ENCODE measurements at regions of chr2 and their contacts with region 1.

Region 1: GRCh38 chr2:174577967-174578589 is 19.5 kb downstream of the WIPF1 start:
- DNase-seq: peak; percentile 68
- ATAC-seq: peak; percentile 74
- H3K4me3 Mint-ChIP-seq: no peak overlapping the region
- H3K27ac Mint-ChIP-seq: peak overlapping the region; percentile 31
- H3K4me1 Mint-ChIP-seq: peaks cover 72% of the 10 kb centered on the region
- H3K27me3 Mint-ChIP-seq: no peaks in the 10 kb centered on the region

Region 2: DNA sequence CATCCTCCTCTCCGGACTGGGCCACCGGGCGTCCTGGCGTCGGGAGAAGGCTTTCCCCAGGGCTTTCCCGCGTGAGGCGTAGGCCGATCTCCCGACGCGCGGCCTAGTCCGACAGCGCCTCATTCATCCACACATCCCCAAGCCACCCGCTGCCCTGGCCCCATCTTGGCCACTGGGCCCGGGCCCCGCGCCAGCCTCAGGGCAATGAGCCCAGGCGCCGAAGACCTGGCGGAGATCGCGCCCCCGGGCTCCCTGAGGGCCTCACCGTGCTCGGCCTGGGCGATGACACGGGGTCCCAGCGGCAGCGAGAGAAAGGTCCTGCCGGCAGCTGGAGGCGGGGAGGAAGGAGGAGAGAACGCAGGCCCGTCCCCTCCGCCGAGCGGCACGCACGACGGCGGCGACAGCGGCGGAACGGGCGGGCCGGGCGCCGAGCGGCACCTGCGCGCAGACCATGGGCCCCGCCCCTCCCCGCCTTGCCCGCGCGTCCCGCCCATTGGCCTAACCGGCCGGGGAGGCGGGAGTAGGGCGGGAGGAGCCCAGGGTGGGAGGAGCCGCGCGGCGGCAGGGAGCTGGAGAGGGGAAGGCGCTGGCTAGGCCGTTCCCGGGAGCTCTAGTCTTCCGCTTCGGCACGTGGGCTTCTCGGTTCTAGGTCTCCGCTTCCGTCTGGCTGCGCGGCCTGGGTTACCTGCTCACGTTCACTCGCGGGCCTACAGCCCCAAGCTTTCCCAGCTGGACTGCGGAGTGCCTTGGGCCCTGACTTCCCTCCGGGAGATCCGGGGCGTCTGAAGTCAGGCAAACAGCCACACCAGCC is 329.7 kb before region 1 on chr2 and contains the start of gene OLA1:
- CTCF ChIA-PET with region 1: no interaction called
- POLR2A ChIA-PET with region 1: no interaction called
- intact Hi-C with region 1: no loop called
- DNase-seq: peak; percentile 98
- ATAC-seq: peak; percentile 97
- H3K4me3 Mint-ChIP-seq: peak within 1 kb of the TSS; percentile 90
- H3K27ac Mint-ChIP-seq: peak within 1 kb of the TSS; percentile 85
- H3K4me1 Mint-ChIP-seq: peaks cover 31% of the 10 kb centered on the region
- H3K27me3 Mint-ChIP-seq: no peaks in the 10 kb centered on the region
- total RNA-seq, gene OLA1: 136 to 157 TPM

Region 3: GRCh38 chr2:174593574-174594203 is 15.6 kb after region 1 on chr2:
- CTCF ChIA-PET with region 1: interaction called, 64 read pairs
- POLR2A ChIA-PET with region 1: interaction called, 3 read pairs
- intact Hi-C with region 1: no loop called
- DNase-seq: peak; percentile 80
- ATAC-seq: peak; percentile 67
- H3K4me3 Mint-ChIP-seq: peak overlapping the region; percentile 70
- H3K27ac Mint-ChIP-seq: peak overlapping the region; percentile 97
- H3K4me1 Mint-ChIP-seq: peaks cover 63% of the 10 kb centered on the region
- H3K27me3 Mint-ChIP-seq: no peaks in the 10 kb centered on the region

Region 4: GRCh38 chr2:174610243-174610995 is 32.3 kb after region 1 on chr2:
- CTCF ChIA-PET with region 1: interaction called, 14 read pairs
- POLR2A ChIA-PET with region 1: no interaction called
- intact Hi-C with region 1: no loop called
- DNase-seq: no peak
- ATAC-seq: no peak
- H3K4me3 Mint-ChIP-seq: peak overlapping the region; percentile 28
- H3K27ac Mint-ChIP-seq: peak overlapping the region; percentile 99
- H3K4me1 Mint-ChIP-seq: peaks cover 93% of the 10 kb centered on the region
- H3K27me3 Mint-ChIP-seq: no peaks in the 10 kb centered on the region

Region 5: DNA sequence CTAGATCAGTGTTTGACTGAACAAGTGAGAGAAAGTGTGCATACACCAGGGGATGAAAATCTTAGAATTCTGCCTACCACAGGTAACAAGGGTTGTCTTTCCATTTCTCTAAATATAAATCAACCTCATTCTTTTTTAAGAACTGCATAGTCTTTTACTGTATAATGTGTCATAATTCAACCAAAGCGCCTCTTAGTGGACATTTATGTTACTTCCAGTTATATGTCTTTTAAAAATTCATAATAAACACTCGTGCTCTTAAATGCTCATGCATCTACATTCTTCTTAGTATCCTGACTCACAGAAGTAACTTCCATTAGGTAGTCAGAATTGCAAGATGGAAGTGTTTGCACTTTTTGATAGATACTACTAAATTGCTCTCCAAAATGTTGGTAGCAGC is 110.0 kb after region 1 on chr2:
- CTCF ChIA-PET with region 1: interaction called, 172 read pairs
- POLR2A ChIA-PET with region 1: no interaction called
- intact Hi-C with region 1: loop called (anchors 1 kb)
- DNase-seq: no peak
- ATAC-seq: peak; percentile 70
- H3K4me3 Mint-ChIP-seq: no peak overlapping the region
- H3K27ac Mint-ChIP-seq: no peak overlapping the region
- H3K4me1 Mint-ChIP-seq: peaks cover 19% of the 10 kb centered on the region
- H3K27me3 Mint-ChIP-seq: no peaks in the 10 kb centered on the region

Region 6: DNA sequence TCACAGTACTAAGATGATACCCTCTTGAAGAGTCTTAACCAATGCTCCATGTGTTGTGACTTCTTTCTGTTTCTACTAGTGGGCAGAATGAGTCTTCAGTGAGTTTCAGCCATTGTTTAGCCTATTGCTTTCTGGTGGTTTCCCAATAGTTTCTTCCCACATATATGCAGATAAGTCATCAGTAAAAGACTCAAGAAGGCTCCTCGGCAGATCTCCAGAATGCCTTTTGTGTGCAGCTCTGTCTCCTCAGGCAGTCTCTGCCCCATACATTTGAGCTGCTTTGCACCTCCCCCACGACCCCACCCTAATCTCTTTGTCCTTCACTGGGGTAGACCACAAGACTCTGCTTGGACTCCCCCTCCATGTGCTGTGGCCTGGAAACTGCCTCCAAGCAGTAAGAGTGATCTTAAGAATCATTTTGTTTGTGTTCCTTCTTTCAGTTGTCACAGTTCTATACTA is 257.7 kb after region 1 on chr2:
- CTCF ChIA-PET with region 1: no interaction called
- POLR2A ChIA-PET with region 1: no interaction called
- intact Hi-C with region 1: loop called in 1 of 2 experiments (anchors 10 kb)
- DNase-seq: peak; percentile 68
- ATAC-seq: peak; percentile 95
- H3K4me3 Mint-ChIP-seq: peak overlapping the region; percentile 41
- H3K27ac Mint-ChIP-seq: peak overlapping the region; percentile 96
- H3K4me1 Mint-ChIP-seq: peaks cover 42% of the 10 kb centered on the region
- H3K27me3 Mint-ChIP-seq: peaks cover 2% of the 10 kb centered on the region